Heart left ventricle (tissue), 16 donors: ENCODE measurements at regions of chr17 and their contacts with region 1.

Region 1: GRCh38 chr17:7351665-7352501 is at the start of gene KCTD11:
- DNase-seq: peak; percentile 91 to 95 (median 95)
- ATAC-seq: peak; percentile 45 to 81 (median 72)
- H3K4me3 ChIP-seq: peak within 1 kb of the TSS; percentile 49 to 98 (median 87)
- H3K27ac ChIP-seq: peak within 1 kb of the TSS; percentile 95 to 100 (median 97)
- H3K4me1 ChIP-seq: peaks cover 0 to 67% (median 38%) of the 10 kb centered on the region in 12 donors
- H3K27me3 ChIP-seq: no peaks in the 10 kb centered on the region
- CTCF ChIP-seq: peak in 7 of 12 donors; percentile 31 to 67 (median 49)
- POLR2A ChIP-seq: peak in 1 of 2 donors; percentile 80
- total RNA-seq, gene KCTD11: 3.4 to 9.0 (median 5.9) TPM

Region 2: GRCh38 chr17:7060165-7060891 is 291.6 kb before region 1 on chr17:
- intact Hi-C with region 1: no loop called
- DNase-seq: no peak
- ATAC-seq: no peak
- H3K4me3 ChIP-seq: no peak overlapping the region
- H3K27ac ChIP-seq: no peak overlapping the region
- H3K4me1 ChIP-seq: no peaks in the 10 kb centered on the region
- H3K27me3 ChIP-seq: peaks cover 0 to 13% (median 0%) of the 10 kb centered on the region in 9 donors
- CTCF ChIP-seq: no peak
- POLR2A ChIP-seq: no peak

Region 3: GRCh38 chr17:7177196-7177953 is 174.5 kb before region 1 on chr17:
- intact Hi-C with region 1: no loop called
- DNase-seq: peak in 4 of 5 donors; percentile 57 to 70 (median 66)
- ATAC-seq: peak; percentile 69 to 84 (median 74)
- H3K4me3 ChIP-seq: peak overlapping the region in 11 of 12 donors; percentile 15 to 56 (median 46)
- H3K27ac ChIP-seq: peak overlapping the region in 1 of 12 donors; percentile 24
- H3K4me1 ChIP-seq: peaks cover 0 to 30% (median 12%) of the 10 kb centered on the region in 12 donors
- H3K27me3 ChIP-seq: peaks cover 0 to 23% (median 17%) of the 10 kb centered on the region in 9 donors
- CTCF ChIP-seq: peak; percentile 76 to 92 (median 84)
- POLR2A ChIP-seq: no peak

Region 4: GRCh38 chr17:7329374-7329996 is 22.4 kb before region 1 on chr17:
- intact Hi-C with region 1: loop called in 1 of 10 experiments (anchors 1 kb)
- DNase-seq: peak; percentile 98 to 100 (median 99)
- ATAC-seq: peak; percentile 89 to 92 (median 91)
- H3K4me3 ChIP-seq: peak overlapping the region; percentile 67 to 95 (median 90)
- H3K27ac ChIP-seq: peak overlapping the region; percentile 81 to 97 (median 90)
- H3K4me1 ChIP-seq: peaks cover 0 to 24% (median 16%) of the 10 kb centered on the region in 12 donors
- H3K27me3 ChIP-seq: peaks cover 0 to 7% (median 0%) of the 10 kb centered on the region in 9 donors
- CTCF ChIP-seq: peak in 3 of 12 donors; percentile 14 to 35 (median 35)
- POLR2A ChIP-seq: peak in 1 of 2 donors; percentile 62

Region 5: GRCh38 chr17:7435221-7435675 is 83.4 kb after region 1 on chr17 and contains the start of gene TMEM102:
- intact Hi-C with region 1: loop called in 9 of 10 experiments (anchors 2 to 10 kb)
- DNase-seq: peak; percentile 95 to 97 (median 95)
- ATAC-seq: peak; percentile 87 to 94 (median 90)
- H3K4me3 ChIP-seq: peak within 1 kb of the TSS; percentile 9 to 75 (median 53)
- H3K27ac ChIP-seq: peak within 1 kb of the TSS in 11 of 12 donors; percentile 3 to 91 (median 52)
- H3K4me1 ChIP-seq: peaks cover 4 to 56% (median 40%) of the 10 kb centered on the region in 12 donors
- H3K27me3 ChIP-seq: peaks cover 0 to 35% (median 8%) of the 10 kb centered on the region in 9 donors
- CTCF ChIP-seq: peak in 1 of 12 donors; percentile 7
- POLR2A ChIP-seq: peak in 1 of 2 donors; percentile 49
- total RNA-seq, gene TMEM102: 1.7 to 6.8 (median 4.0) TPM

Region 6: DNA sequence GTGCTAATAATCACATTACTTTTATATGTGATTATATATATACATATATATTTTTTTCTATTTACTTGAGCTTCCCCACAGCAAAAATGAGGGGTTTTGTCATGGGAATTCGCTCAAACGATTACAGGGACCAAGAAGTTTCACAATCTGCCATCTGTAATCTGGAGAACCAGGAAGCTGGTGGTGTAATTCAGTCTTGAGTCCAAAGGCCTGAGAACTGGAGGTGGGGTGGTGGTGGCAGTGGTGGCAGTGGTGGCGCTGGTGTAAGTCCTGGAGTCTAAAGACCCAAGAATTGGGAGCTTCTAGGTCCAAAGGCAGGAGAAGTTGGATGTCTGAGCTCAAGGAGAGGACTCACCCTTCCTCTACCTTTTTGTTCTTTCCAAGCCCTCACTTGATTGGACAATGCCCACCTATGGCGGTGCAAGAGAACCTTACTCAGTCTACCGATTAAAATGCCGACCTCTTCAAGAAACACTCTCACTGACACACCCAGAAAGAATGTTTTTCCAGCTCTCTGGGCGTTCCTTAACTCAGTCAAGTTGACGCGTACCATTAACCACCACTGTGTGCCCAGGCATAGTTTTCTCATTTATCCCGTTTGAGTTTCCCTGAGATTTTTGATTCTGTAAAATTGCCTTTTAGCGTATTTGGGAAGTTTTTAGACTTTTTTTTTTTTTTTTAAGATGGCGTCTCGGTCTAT is 164.2 kb after region 1 on chr17:
- intact Hi-C with region 1: loop called in 1 of 10 experiments (anchors 10 kb)
- DNase-seq: no peak
- ATAC-seq: peak in 1 of 4 donors; percentile 21
- H3K4me3 ChIP-seq: no peak overlapping the region
- H3K27ac ChIP-seq: no peak overlapping the region
- H3K4me1 ChIP-seq: peaks cover 0 to 15% (median 0%) of the 10 kb centered on the region in 12 donors
- H3K27me3 ChIP-seq: no peaks in the 10 kb centered on the region
- CTCF ChIP-seq: no peak
- POLR2A ChIP-seq: no peak

Region 7: DNA sequence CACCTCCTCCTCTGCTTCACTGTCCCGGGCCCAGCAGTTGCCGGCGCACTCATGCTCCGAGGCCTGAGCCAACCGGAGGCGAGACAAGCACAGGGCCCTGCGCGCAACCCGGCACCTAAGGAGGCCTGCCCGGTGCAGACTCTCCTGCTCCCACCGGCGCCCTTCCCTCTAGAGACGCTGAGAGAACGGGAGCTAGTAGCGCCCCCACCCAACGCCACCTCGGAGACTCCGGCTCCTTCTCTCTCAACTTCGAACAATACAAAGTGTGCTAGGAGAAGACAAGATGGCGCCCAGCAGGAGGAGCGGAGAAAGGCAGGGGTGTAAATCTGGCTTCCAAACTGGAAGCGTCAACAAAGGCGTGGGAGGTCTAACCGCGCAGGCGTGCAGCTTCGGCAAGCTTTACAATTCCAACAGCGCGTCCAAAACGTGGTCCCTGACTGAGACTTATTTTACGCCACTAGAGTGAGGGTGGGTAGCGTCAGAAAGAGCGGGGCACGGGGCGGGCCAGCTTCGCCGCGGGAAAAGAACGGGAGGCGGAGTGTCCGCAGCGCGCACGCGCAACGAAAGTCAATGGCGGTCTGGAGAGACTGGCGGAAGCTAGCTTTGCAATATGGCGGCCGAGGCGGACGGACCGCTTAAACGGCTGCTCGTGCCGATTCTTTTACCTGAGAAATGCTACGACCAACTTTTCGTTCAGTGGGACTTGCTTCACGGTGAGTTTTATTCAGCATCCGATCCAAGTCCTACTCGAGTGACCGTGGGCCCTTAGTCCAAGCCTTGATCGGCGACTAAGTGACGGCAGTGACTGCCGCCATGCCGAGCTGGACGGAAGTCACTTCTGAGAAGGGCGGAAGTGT is 231.6 kb after region 1 on chr17 and contains the start of gene MPDU1:
- intact Hi-C with region 1: loop called in 4 of 10 experiments (anchors 5 to 10 kb)
- DNase-seq: peak; percentile 97 to 99 (median 98)
- ATAC-seq: peak; percentile 84 to 93 (median 87)
- H3K4me3 ChIP-seq: peak within 1 kb of the TSS; percentile 41 to 77 (median 67)
- H3K27ac ChIP-seq: peak within 1 kb of the TSS; percentile 88 to 98 (median 94)
- H3K4me1 ChIP-seq: peaks cover 4 to 75% (median 43%) of the 10 kb centered on the region in 12 donors
- H3K27me3 ChIP-seq: no peaks in the 10 kb centered on the region
- CTCF ChIP-seq: peak in 2 of 12 donors; percentile 3 to 18
- POLR2A ChIP-seq: peak in 1 of 2 donors; percentile 32
- total RNA-seq, gene MPDU1: 18.4 to 90.1 (median 25.4) TPM